ENCODE measurements at regions of chr22 and their contacts with region 1.

Region 1: GRCh38 chr22:20495861-20496681 is 476 bp upstream of the KLHL22 start:
- DNase-seq: peak; percentile 90 to 94 (median 92)
- H3K4me3 ChIP-seq: peak overlapping the region; percentile 52
- H3K27ac ChIP-seq: peak overlapping the region; percentile 77 to 99
- H3K4me1 ChIP-seq: no peaks in the 10 kb centered on the region
- H3K27me3 ChIP-seq: no peaks in the 10 kb centered on the region
- CTCF ChIP-seq: peak; percentile 83 to 94 (median 90)
- EP300 ChIP-seq: no peak
- POLR2A ChIP-seq: peak; percentile 51

Region 2: GRCh38 chr22:20550821-20551744 is 55.0 kb after region 1 on chr22:
- intact Hi-C with region 1: loop called in 1 of 4 experiments (anchors 10 kb)
- DNase-seq: peak; percentile 64 to 72 (median 70)
- H3K4me3 ChIP-seq: no peak overlapping the region
- H3K27ac ChIP-seq: peak overlapping the region; percentile 75 to 91
- H3K4me1 ChIP-seq: peaks cover 49% of the 10 kb centered on the region
- H3K27me3 ChIP-seq: no peaks in the 10 kb centered on the region
- CTCF ChIP-seq: no peak
- EP300 ChIP-seq: no peak
- POLR2A ChIP-seq: no peak

Measured in ovary (tissue), 10 donors.